Left ventricle myocardium superior (tissue), 1 donor: ENCODE measurements at regions of chr16 and their contacts with region 1.

Region 1: GRCh38 chr16:23527961-23528643 is 17.8 kb upstream of the GGA2 start:
- DNase-seq: no peak
- ATAC-seq: peak; percentile 53

Region 2: GRCh38 chr16:23257637-23258036 is 270.5 kb before region 1 on chr16:
- intact Hi-C with region 1: no loop called
- DNase-seq: no peak
- ATAC-seq: no peak

Region 3: GRCh38 chr16:23348579-23349469 is 179.3 kb before region 1 on chr16:
- intact Hi-C with region 1: no loop called
- DNase-seq: no peak
- ATAC-seq: no peak

Region 4: DNA sequence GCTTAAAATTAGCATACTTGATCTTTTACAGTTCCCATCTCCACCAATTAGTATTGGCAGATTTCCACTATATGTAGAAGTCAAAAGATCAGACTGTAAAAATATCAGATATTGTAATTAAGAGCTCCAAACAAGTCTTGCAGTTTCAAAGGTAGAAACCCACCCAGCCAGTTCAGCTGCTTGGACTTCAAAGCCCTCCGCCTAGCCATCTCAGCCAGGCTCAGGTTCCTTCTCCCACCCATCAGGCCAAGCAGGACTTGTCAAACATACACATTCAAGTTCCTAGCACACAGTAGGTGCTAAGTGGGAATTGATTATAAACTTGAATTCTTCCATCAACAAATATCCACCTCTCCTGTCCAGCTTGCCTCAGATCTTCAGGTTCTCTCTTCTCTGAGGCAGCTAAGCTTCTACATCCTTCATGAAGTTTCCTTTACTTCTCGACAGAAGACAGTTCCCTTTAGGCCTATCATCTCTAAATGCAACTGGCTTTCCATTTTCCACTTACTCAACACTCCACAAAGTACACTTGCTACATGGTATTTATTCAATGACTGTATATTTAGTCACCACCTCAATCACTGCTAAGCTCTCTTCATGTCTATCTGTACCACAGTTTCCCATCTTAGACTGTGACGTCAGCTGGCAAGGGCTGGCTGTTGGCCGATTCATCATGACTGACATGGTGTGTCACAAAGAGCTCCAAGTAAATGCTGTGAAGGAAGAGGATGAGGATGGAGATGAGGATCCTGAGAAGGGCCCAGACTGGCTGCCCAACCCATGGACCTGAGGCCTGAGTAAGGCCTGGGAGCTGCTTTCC is 61.8 kb before region 1 on chr16:
- intact Hi-C with region 1: loop called (anchors 10 kb)
- DNase-seq: peak; percentile 42
- ATAC-seq: peak; percentile 30